ENCODE measurements at regions of chr1 and their contacts with region 1.

Region 1: GRCh38 chr1:166910396-166910994 is 34.4 kb upstream of the TADA1 start:
- DNase-seq: peak; percentile 70
- H3K4me3 Mint-ChIP-seq: no peak overlapping the region
- H3K27ac Mint-ChIP-seq: no peak overlapping the region
- H3K4me1 Mint-ChIP-seq: peaks cover 28% of the 10 kb centered on the region
- H3K27me3 Mint-ChIP-seq: peaks cover 5% of the 10 kb centered on the region

Region 2: DNA sequence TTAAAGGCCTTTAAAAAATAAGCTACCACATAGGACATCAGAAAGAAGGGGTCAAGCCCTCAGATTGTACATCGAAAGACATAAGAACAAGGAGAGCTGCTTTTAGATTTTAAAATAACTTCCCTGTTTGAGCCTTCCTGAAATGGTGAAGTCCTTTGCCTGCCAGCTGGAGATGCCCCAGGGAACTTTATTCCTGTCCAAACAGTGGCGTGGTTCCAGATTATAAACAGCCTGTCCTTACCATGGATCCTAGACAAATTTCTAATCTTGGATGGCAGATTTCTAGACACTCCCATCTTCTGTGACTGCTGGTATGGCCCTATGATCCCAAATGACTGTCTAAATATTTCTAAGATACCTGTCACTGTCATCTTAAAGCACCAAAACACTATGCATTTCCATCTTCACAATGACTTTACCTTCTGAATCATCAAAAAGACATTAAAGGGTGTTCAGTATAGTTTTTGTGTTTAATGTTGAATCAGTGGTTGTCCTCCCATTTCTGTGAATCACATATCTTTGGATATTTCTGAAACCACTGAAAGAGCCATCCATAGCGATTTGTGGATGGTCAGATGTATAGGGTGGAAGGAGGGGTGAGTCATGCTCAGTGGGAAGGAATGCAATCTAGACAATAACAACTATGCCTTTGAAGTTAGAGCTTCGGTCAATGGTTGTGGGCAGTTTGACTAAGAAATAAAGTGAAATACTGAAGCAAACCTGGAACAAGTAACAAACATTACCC is 41.7 kb after region 1 on chr1:
- intact Hi-C with region 1: loop called (anchors 1 kb)
- DNase-seq: no peak
- H3K4me3 Mint-ChIP-seq: no peak overlapping the region
- H3K27ac Mint-ChIP-seq: peak overlapping the region; percentile 13
- H3K4me1 Mint-ChIP-seq: peaks cover 19% of the 10 kb centered on the region
- H3K27me3 Mint-ChIP-seq: peaks cover 21% of the 10 kb centered on the region

Region 3: GRCh38 chr1:167043752-167044488 is 133.4 kb after region 1 on chr1:
- intact Hi-C with region 1: loop called (anchors 1 kb)
- DNase-seq: peak; percentile 65
- H3K4me3 Mint-ChIP-seq: peak overlapping the region; percentile 79
- H3K27ac Mint-ChIP-seq: no peak overlapping the region
- H3K4me1 Mint-ChIP-seq: peaks cover 19% of the 10 kb centered on the region
- H3K27me3 Mint-ChIP-seq: peaks cover 29% of the 10 kb centered on the region

Region 4: GRCh38 chr1:167121375-167122120 is 211.1 kb after region 1 on chr1:
- intact Hi-C with region 1: loop called (anchors 5 kb)
- DNase-seq: peak; percentile 13
- H3K4me3 Mint-ChIP-seq: peak overlapping the region; percentile 80
- H3K27ac Mint-ChIP-seq: no peak overlapping the region
- H3K4me1 Mint-ChIP-seq: peaks cover 6% of the 10 kb centered on the region
- H3K27me3 Mint-ChIP-seq: peaks cover 8% of the 10 kb centered on the region

Measured in activated T-helper 1 cell treated with anti-CD3 and anti-CD28 coated beads, Interleukin-12 subunit alpha, Interleukin-12 subunit beta, Interleukin-2, Interleukin-4 antibody, amounts not matched to agents 30 ng/mL and 10 ng/mL and 1 ng/mL, durations not matched to agents 14 hours and 24 hours and 36 hours (primary cell).